Posterior vena cava (tissue), 2 donors: ENCODE measurements at regions of chr3 and their contacts with region 1.

Region 1: GRCh38 chr3:68876112-68876713 is 56.1 kb downstream of the TAFA4 start:
- DNase-seq: no peak

Region 2: GRCh38 chr3:66962664-66963063 is 1913.5 kb before region 1 on chr3:
- intact Hi-C with region 1: loop called in 1 of 2 experiments (anchors 10 kb)
- DNase-seq: no peak

Region 3: DNA sequence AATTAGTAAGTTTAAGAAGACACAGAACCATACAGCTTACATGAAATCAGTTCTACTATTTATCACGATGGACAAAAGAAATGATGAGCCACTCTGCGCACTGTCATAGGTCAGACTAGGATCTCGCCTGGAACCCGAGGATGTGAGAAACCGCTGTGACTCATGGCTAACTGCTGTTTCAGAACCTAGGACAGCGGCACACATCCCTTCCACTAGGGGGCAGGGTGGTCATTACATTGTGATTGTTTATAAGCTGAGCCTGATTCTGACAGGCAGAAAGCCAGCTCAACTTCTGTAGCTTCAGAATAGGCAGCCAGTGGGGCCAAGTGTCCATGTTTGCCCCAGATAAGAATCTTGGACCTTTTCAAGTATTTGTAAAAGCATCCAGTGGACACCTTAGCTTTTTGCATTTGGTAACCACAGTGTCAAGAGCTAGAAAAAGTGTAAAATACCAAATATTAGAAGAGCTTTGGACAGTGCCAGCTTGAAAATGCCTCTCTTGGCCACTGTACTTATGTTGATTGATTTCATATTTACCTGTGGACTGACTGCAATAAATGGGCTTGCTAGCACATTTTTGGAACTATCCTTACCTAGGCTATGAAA is 1762.3 kb before region 1 on chr3:
- intact Hi-C with region 1: loop called in 1 of 2 experiments (anchors 5 kb)
- DNase-seq: peak; percentile 88